Calu3 (cell line): ENCODE measurements at regions of chr2 and their contacts with region 1.

Region 1: GRCh38 chr2:191165176-191165643 is 14.4 kb upstream of the STAT4 start:
- DNase-seq: no peak
- H3K4me3 Mint-ChIP-seq: no peak overlapping the region
- H3K27ac Mint-ChIP-seq: no peak overlapping the region
- H3K4me1 Mint-ChIP-seq: peaks cover 42% of the 10 kb centered on the region
- H3K27me3 Mint-ChIP-seq: peaks cover 13% of the 10 kb centered on the region
- CTCF ChIP-seq: peak; percentile 60

Region 2: DNA sequence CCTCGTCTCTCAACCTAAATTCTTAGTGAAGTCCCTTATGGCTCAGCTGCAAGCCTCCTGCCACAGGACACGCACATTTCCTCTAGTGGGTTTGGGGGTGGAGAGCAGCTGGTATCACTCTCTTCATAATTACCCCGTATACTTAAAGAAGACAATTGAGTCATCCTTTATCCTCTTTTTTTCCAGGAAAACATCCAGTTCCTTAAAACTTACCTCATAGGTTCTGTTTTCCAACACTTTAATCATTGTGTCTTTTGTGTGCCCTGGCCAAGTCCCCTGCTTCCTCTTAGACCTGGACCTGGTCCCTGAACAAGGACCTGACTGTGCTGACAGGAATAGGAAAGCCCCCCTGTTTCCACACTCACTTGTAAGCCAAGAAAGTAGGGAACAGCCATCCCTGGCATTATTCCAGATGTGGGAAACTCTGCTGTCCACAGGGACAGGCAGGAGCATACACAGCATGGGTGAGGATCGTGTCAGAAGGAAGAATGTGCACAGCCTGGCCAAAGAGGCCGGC is 37.7 kb after region 1 on chr2:
- CTCF ChIA-PET with region 1: no interaction called
- intact Hi-C with region 1: no loop called
- DNase-seq: no peak
- H3K4me3 Mint-ChIP-seq: no peak overlapping the region
- H3K27ac Mint-ChIP-seq: no peak overlapping the region
- H3K4me1 Mint-ChIP-seq: no peaks in the 10 kb centered on the region
- H3K27me3 Mint-ChIP-seq: no peaks in the 10 kb centered on the region
- CTCF ChIP-seq: no peak

Region 3: GRCh38 chr2:191218292-191218898 is 53.2 kb after region 1 on chr2:
- CTCF ChIA-PET with region 1: interaction called, 8 read pairs
- intact Hi-C with region 1: loop called (anchors 2 kb)
- DNase-seq: peak; percentile 68
- H3K4me3 Mint-ChIP-seq: no peak overlapping the region
- H3K27ac Mint-ChIP-seq: no peak overlapping the region
- H3K4me1 Mint-ChIP-seq: peaks cover 31% of the 10 kb centered on the region
- H3K27me3 Mint-ChIP-seq: no peaks in the 10 kb centered on the region
- CTCF ChIP-seq: peak; percentile 53

Region 4: GRCh38 chr2:191245046-191245868 is 80.0 kb after region 1 on chr2 and contains the start of gene MYO1B:
- CTCF ChIA-PET with region 1: interaction called, 8 read pairs
- intact Hi-C with region 1: loop called (anchors 5 kb)
- DNase-seq: peak; percentile 92
- H3K4me3 Mint-ChIP-seq: peak within 1 kb of the TSS; percentile 80
- H3K27ac Mint-ChIP-seq: peak within 1 kb of the TSS; percentile 95
- H3K4me1 Mint-ChIP-seq: peaks cover 39% of the 10 kb centered on the region
- H3K27me3 Mint-ChIP-seq: no peaks in the 10 kb centered on the region
- CTCF ChIP-seq: peak; percentile 44
- total RNA-seq, gene MYO1B: 56.7 and 64.5 TPM in 2 replicates

Region 5: DNA sequence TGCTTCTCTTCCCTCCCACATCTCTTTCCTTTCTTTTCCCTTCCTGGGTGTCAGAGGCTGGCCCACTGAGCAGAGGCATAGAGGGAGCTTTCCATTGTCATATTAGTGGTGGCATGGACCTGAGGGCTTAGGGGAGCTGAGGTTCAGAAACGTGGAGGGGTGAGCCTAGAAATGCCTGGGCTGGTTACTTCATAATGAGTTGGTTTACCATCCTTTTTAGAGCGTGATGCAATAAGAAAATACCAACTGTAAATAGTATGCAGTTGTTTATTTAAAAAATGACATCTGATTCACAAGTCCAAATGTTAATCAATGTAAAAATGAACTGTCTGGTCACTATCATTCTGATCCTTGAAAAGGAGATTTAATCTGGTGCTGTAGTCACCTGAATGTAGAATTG is 126.3 kb after region 1 on chr2:
- CTCF ChIA-PET with region 1: no interaction called
- intact Hi-C with region 1: no loop called
- DNase-seq: no peak
- H3K4me3 Mint-ChIP-seq: no peak overlapping the region
- H3K27ac Mint-ChIP-seq: no peak overlapping the region
- H3K4me1 Mint-ChIP-seq: peaks cover 8% of the 10 kb centered on the region
- H3K27me3 Mint-ChIP-seq: no peaks in the 10 kb centered on the region
- CTCF ChIP-seq: no peak

Region 6: DNA sequence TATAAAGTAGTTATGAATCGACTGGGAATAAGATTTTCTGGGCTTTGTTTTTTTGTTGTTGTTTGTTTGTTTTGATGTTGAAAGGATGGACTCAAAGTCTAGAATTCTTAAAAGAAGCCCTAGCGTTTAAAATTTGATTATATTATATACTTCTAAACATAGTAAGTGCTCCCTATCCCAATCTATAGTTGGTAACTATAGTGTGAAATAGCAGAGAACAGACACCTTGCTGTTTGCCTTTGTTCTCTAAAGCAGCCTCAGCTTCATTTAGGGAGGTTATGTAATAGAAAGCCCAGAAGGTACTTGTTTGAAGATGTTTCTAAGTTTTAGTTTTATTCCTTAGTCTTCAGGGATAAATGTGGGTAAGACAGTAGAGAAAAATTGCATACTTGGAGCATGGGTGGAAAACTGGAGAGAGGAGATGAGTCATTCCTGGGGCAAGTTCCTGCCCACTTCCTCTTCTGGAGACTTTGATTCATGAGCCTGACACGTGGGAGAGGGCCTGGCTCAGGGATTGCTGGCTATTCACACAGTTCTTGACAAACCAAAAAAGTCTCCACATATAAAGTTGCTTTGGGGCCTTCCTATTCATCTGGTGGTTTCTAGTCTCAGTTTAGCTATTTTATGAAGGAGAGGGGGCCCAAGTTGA is 211.9 kb after region 1 on chr2:
- CTCF ChIA-PET with region 1: no interaction called
- intact Hi-C with region 1: loop called (anchors 10 kb)
- DNase-seq: peak; percentile 71
- H3K4me3 Mint-ChIP-seq: peak overlapping the region; percentile 29
- H3K27ac Mint-ChIP-seq: peak overlapping the region; percentile 82
- H3K4me1 Mint-ChIP-seq: peaks cover 40% of the 10 kb centered on the region
- H3K27me3 Mint-ChIP-seq: no peaks in the 10 kb centered on the region
- CTCF ChIP-seq: no peak

Region 7: DNA sequence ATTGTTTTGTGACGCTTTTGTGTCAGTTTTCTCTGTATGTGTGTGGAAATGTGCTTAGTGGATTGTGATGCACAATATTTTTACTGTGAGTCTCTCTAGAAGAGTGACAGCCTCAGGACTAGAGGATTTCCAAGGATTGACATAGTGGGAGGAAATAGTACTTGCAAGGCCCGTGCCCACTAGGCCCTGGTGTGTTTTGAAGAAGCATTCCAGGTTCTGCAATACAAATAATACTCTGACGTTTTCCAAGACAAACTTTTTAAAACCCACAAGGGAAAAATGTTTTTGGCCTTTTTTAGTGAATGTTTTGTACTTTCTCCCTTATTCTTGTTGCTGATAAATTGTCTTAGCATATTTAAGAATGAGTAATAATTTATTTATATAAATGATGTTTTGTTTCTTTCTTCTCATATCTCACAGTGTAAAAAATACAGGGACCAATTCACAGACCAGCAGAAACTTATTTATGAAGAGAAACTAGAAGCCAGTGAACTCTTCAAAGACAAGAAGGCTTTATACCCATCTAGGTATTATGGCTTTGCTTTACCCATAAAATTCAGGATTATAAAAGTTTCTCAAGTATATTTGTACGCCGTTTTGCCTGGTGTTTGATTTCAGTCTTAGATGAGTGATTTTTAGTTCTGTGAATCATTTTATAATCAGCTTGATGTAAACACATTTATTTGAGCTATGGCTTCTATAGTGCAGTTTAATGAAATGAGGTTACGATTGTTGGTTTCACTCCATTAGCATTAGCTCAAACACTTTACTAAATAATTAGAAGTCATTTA is 245.6 kb after region 1 on chr2:
- CTCF ChIA-PET with region 1: no interaction called
- intact Hi-C with region 1: loop called (anchors 10 kb)
- DNase-seq: no peak
- H3K4me3 Mint-ChIP-seq: no peak overlapping the region
- H3K27ac Mint-ChIP-seq: no peak overlapping the region
- H3K4me1 Mint-ChIP-seq: no peaks in the 10 kb centered on the region
- H3K27me3 Mint-ChIP-seq: no peaks in the 10 kb centered on the region
- CTCF ChIP-seq: no peak

Region 8: DNA sequence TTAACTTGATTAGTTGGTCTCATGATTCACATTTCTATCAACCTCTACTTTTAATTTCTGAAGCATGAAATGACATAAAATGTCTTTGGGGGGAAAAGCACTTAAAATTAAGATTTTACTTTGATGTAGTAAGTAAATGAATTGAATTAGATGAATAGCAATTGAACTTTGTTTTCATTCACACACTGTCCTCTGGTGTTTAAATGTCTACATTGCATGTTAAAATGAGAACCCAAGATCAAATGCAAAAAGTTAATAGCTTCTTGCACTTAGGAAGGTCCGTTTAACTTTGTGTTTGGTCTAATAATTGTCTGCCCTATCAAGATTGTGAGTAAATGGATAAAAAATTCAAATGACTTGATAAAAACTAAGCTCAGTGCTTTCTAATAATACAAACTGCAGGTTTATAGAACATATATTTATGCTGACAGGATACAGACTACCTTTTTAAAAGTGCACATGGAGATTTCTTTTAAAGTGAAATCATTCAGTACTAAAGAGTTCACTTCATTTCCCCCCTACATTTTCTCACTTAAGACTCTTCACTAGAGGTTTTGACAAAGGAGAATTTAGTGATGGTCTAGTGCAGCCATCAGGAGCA is 356.5 kb after region 1 on chr2:
- CTCF ChIA-PET with region 1: interaction called, 12 read pairs
- intact Hi-C with region 1: loop called (anchors 1 kb)
- DNase-seq: no peak
- H3K4me3 Mint-ChIP-seq: no peak overlapping the region
- H3K27ac Mint-ChIP-seq: no peak overlapping the region
- H3K4me1 Mint-ChIP-seq: no peaks in the 10 kb centered on the region
- H3K27me3 Mint-ChIP-seq: no peaks in the 10 kb centered on the region
- CTCF ChIP-seq: peak; percentile 78